ENCODE measurements at regions of chr19 and their contacts with region 1.

Region 1: GRCh38 chr19:39125554-39126311 is at the start of gene PAK4:
- DNase-seq: peak; percentile 97
- ATAC-seq: peak; percentile 96 to 98 (median 97)
- H3K4me3 ChIP-seq: peak within 1 kb of the TSS; percentile 37
- H3K4me3 Mint-ChIP-seq: peak within 1 kb of the TSS; percentile 98
- H3K27ac ChIP-seq: peak within 1 kb of the TSS; percentile 73
- H3K27ac Mint-ChIP-seq: peak within 1 kb of the TSS; percentile 95 to 100
- H3K4me1 ChIP-seq: peaks cover 25% of the 10 kb centered on the region
- H3K4me1 Mint-ChIP-seq: peaks cover 20 to 33% of the 10 kb centered on the region in 2 donors
- H3K27me3 ChIP-seq: no peaks in the 10 kb centered on the region
- H3K27me3 Mint-ChIP-seq: peaks cover 0 to 4% of the 10 kb centered on the region in 2 donors
- CTCF ChIP-seq: no peak
- total RNA-seq, gene PAK4: 6.7 to 13.4 (median 11.8) TPM

Region 2: GRCh38 chr19:39187559-39187957 is 61.8 kb after region 1 on chr19:
- intact Hi-C with region 1: loop called (anchors 1 kb)
- DNase-seq: no peak
- ATAC-seq: no peak
- H3K4me3 ChIP-seq: no peak overlapping the region
- H3K4me3 Mint-ChIP-seq: no peak overlapping the region
- H3K27ac ChIP-seq: no peak overlapping the region
- H3K27ac Mint-ChIP-seq: no peak overlapping the region
- H3K4me1 ChIP-seq: no peaks in the 10 kb centered on the region
- H3K4me1 Mint-ChIP-seq: no peaks in the 10 kb centered on the region
- H3K27me3 ChIP-seq: no peaks in the 10 kb centered on the region
- H3K27me3 Mint-ChIP-seq: peaks cover 0 to 3% of the 10 kb centered on the region in 2 donors
- CTCF ChIP-seq: peak; percentile 18

Region 3: DNA sequence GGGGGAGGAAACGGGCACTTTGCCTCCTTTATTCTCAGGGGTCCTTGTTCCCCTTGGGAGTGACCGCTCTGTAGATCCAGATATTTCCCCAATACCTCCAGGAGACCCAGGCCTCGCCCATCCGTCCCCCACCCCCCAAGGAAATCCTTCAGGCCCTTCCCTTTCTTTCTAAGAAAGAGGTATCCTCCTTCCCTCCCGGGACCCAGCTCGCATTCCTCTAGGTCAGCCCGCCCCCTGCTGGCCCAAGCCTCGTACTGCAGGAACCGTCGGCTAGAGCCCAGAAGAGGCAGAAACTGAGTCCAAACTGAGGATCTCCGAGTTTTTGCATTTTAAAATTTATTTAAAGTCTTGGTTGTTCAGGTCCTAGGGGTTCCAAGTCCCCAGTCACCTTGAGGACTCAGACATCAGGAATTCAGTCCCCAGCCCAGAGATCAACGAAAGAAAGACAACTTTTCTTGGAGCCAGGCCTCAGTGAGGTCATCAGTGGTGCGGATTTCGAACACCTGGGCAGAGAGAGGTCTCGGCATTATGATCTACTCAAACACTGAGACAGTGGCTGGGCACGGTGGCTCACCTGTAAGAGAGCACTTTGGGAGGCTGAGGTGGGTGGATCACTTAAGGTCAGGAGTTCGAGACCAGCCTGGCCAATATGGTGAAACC is 202.4 kb after region 1 on chr19:
- intact Hi-C with region 1: loop called (anchors 1 kb)
- DNase-seq: peak; percentile 83 to 88
- ATAC-seq: peak; percentile 88 to 95 (median 89)
- H3K4me3 ChIP-seq: no peak overlapping the region
- H3K4me3 Mint-ChIP-seq: peak overlapping the region; percentile 28
- H3K27ac ChIP-seq: no peak overlapping the region
- H3K27ac Mint-ChIP-seq: peak overlapping the region; percentile 64 to 81
- H3K4me1 ChIP-seq: peaks cover 44% of the 10 kb centered on the region
- H3K4me1 Mint-ChIP-seq: peaks cover 23 to 29% of the 10 kb centered on the region in 2 donors
- H3K27me3 ChIP-seq: no peaks in the 10 kb centered on the region
- H3K27me3 Mint-ChIP-seq: no peaks in the 10 kb centered on the region
- CTCF ChIP-seq: peak; percentile 96

Region 4: GRCh38 chr19:39532233-39533002 is 406.7 kb after region 1 on chr19 and contains the start of gene EID2B:
- intact Hi-C with region 1: loop called (anchors 2 kb)
- DNase-seq: peak; percentile 92 to 100
- ATAC-seq: peak; percentile 96 to 99 (median 97)
- H3K4me3 ChIP-seq: peak within 1 kb of the TSS; percentile 70
- H3K4me3 Mint-ChIP-seq: peak within 1 kb of the TSS; percentile 93
- H3K27ac ChIP-seq: peak within 1 kb of the TSS; percentile 73
- H3K27ac Mint-ChIP-seq: peak within 1 kb of the TSS; percentile 79 to 86
- H3K4me1 ChIP-seq: peaks cover 14% of the 10 kb centered on the region
- H3K4me1 Mint-ChIP-seq: peaks cover 8 to 13% of the 10 kb centered on the region in 2 donors
- H3K27me3 ChIP-seq: no peaks in the 10 kb centered on the region
- H3K27me3 Mint-ChIP-seq: no peaks in the 10 kb centered on the region
- CTCF ChIP-seq: peak; percentile 90
- total RNA-seq, gene EID2B: 4.6 to 6.7 (median 5.8) TPM

Measured in natural killer cell (primary cell).